Gastrocnemius medialis (tissue), 4 donors: ENCODE measurements at regions of chr14 and their contacts with region 1.

Region 1: DNA sequence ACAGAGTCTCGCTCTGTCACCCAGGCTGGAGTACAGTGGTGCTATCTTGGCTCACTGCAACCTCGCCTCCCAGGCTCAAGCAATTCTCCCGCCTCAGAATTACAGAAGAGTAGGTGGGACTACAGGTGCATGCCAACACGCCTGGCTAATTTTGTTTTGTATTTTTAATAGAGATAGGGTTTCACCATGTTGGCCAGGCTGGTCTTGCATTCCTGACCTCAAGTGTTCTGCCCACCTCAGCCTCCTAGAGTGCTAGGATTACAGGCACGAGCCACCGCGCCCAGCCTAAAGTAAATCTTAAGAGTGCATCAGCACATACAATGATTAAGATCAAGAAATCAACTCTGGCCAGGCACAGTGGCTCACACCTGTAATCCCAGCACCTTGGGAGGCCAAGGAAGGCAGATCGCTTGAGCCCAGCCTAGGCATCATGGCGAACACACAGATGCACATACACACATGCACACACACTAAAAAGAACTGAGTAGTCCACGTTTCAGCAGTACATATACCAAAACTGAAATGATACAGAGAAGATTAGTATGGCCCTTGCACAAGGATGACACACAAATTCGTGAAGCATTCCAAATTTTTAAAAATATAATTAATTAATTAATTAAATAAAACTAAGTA is 65.0 kb downstream of the HECTD1 start:
- DNase-seq: peak in 1 of 2 donors; percentile 46
- ATAC-seq: peak; percentile 30 to 75
- H3K4me3 ChIP-seq: no peak overlapping the region
- H3K27ac ChIP-seq: peak overlapping the region; percentile 42 to 68 (median 63)
- H3K4me1 ChIP-seq: peaks cover 0 to 9% of the 10 kb centered on the region in 2 donors
- H3K27me3 ChIP-seq: no peaks in the 10 kb centered on the region
- CTCF ChIP-seq: no peak
- POLR2A ChIP-seq: no peak

Region 2: DNA sequence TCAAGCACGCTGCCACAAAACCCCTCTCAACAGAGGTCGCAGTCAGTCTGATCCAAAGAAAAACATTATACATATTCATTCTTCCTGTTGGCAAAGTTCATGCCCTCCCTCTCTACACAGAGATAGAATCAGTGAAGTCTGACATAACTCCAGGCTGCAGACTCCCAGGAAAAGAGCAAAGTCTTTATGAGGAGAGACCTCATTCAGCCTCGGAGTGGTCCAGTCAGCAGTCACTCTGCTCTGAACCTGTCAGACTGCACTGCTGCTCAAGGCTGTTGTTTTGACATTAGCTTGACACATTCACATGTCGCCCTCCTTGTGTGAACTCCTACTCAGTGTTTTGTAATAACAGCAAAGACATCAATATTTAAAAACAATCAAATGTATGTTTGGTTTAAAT is 824.8 kb before region 1 on chr14:
- in situ Hi-C with region 1: no loop called
- intact Hi-C with region 1: no loop called
- DNase-seq: no peak
- ATAC-seq: no peak
- H3K4me3 ChIP-seq: no peak overlapping the region
- H3K27ac ChIP-seq: no peak overlapping the region
- H3K4me1 ChIP-seq: no peaks in the 10 kb centered on the region
- H3K27me3 ChIP-seq: no peaks in the 10 kb centered on the region
- CTCF ChIP-seq: no peak
- POLR2A ChIP-seq: no peak

Region 3: GRCh38 chr14:31047503-31047902 is 95.1 kb before region 1 on chr14:
- in situ Hi-C with region 1: no loop called
- intact Hi-C with region 1: no loop called
- DNase-seq: no peak
- ATAC-seq: no peak
- H3K4me3 ChIP-seq: no peak overlapping the region
- H3K27ac ChIP-seq: peak overlapping the region in 1 of 4 donors; percentile 19
- H3K4me1 ChIP-seq: no peaks in the 10 kb centered on the region
- H3K27me3 ChIP-seq: no peaks in the 10 kb centered on the region
- CTCF ChIP-seq: no peak
- POLR2A ChIP-seq: no peak

Region 4: GRCh38 chr14:31106768-31107167 is 35.8 kb before region 1 on chr14:
- in situ Hi-C with region 1: no loop called
- intact Hi-C with region 1: loop called (anchors 5 kb)
- DNase-seq: no peak
- ATAC-seq: peak in 1 of 2 donors; percentile 23
- H3K4me3 ChIP-seq: no peak overlapping the region
- H3K27ac ChIP-seq: peak overlapping the region; percentile 5 to 43 (median 24)
- H3K4me1 ChIP-seq: no peaks in the 10 kb centered on the region
- H3K27me3 ChIP-seq: no peaks in the 10 kb centered on the region
- CTCF ChIP-seq: no peak
- POLR2A ChIP-seq: no peak